K562 (cell line): ENCODE measurements at regions of chr12 and their contacts with region 1.

Region 1: DNA sequence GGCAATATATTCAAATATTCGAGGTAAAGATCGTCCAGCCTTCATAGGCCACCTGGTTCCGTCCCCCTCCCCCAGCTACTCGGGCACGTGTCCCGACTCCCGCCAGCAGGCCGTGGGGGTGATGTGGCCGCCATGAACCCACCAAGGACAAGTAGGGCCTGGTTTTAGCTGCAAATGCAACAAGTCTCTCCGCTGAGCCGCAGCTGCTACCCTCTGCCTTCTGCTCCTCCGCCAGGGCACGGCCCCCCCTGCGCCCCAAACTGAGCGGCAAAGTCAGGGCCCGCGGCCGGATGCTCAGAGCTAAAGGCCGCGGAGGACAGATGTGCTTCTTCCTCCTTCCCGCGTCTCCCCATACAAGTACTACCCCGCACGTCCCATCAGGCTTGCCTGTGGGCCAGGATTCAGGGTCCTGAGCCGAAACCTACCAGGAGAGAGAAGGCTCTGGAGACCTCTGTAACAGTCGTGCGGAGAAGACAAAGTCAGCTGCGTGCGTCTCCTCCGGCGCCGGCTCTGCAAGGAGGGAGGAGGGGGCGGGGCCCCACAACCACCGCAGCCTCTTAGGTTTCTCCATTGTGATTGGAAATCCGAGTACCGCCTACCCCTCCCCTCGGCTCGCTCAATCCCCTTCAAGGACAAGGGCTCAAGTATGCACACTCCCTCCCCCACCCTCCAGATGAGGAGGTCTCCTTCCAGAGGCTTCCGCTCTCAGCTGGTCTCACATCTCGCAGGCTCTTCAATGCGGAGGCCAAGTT is at the start of gene LDHB:
- DNase-seq: peak; percentile 82 to 96 (median 86)
- ATAC-seq: peak; percentile 96
- H3K4me3 ChIP-seq: peak within 1 kb of the TSS; percentile 89
- H3K27ac ChIP-seq: peak within 1 kb of the TSS; percentile 95
- H3K4me1 ChIP-seq: peaks cover 8% of the 10 kb centered on the region in 2 experiments; a peak in 3 of 5 replicates
- H3K27me3 ChIP-seq: no peaks in the 10 kb centered on the region
- CTCF ChIP-seq: no peak
- EP300 ChIP-seq: peak; percentile 38; the same call in 1 of the 2 replicates
- POLR2A ChIP-seq: peak; percentile 94
- RAD21 ChIP-seq: no peak
- polyA plus RNA-seq, gene LDHB: 2,666 to 2,680 TPM

Region 2: GRCh38 chr12:21379218-21379617 is 278.3 kb before region 1 on chr12:
- CTCF ChIA-PET with region 1: no interaction called
- POLR2A ChIA-PET with region 1: no interaction called
- in situ Hi-C with region 1: no loop called
- intact Hi-C with region 1: no loop called
- DNase-seq: no peak
- ATAC-seq: no peak
- H3K4me3 ChIP-seq: no peak overlapping the region
- H3K27ac ChIP-seq: no peak overlapping the region
- H3K4me1 ChIP-seq: no peaks in the 10 kb centered on the region; a peak in 1 of 5 replicates
- H3K27me3 ChIP-seq: no peaks in the 10 kb centered on the region
- CTCF ChIP-seq: no peak
- EP300 ChIP-seq: no peak
- POLR2A ChIP-seq: no peak
- RAD21 ChIP-seq: no peak

Region 3: DNA sequence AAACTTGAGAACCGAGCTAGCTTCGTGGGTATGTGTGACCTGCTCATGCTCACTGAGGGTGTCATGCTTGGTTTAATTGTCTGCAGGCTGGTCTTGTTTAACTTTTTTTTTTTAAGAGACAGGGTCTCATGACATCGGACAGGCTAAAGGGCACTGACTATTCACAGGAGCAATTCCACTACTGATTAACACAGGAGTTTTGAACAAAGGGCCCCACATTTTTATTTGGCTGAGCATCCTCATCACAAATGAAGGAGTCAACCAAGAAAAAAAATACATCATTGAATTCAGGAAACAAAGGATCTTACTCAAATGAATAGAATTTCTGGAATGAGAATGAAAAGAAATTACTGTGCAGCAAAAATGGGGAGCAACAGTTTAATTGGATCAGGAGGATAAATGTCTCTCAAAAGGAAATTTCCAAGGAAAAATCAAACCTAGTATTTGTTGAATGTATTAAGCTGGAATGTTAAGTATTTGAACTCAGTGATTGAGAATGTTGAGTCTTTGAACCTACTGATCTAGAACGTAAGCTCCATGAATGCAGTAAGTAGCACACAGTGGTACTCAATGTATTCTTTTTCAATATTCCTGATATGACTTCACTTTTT is 240.9 kb before region 1 on chr12:
- CTCF ChIA-PET with region 1: no interaction called
- POLR2A ChIA-PET with region 1: no interaction called
- in situ Hi-C with region 1: no loop called
- intact Hi-C with region 1: no loop called
- DNase-seq: no peak
- ATAC-seq: no peak
- H3K4me3 ChIP-seq: no peak overlapping the region
- H3K27ac ChIP-seq: no peak overlapping the region
- H3K4me1 ChIP-seq: peaks cover 3 to 8% of the 10 kb centered on the region in 2 experiments; a peak in 3 of 5 replicates
- H3K27me3 ChIP-seq: no peaks in the 10 kb centered on the region
- CTCF ChIP-seq: no peak
- EP300 ChIP-seq: no peak
- POLR2A ChIP-seq: no peak
- RAD21 ChIP-seq: no peak

Region 4: DNA sequence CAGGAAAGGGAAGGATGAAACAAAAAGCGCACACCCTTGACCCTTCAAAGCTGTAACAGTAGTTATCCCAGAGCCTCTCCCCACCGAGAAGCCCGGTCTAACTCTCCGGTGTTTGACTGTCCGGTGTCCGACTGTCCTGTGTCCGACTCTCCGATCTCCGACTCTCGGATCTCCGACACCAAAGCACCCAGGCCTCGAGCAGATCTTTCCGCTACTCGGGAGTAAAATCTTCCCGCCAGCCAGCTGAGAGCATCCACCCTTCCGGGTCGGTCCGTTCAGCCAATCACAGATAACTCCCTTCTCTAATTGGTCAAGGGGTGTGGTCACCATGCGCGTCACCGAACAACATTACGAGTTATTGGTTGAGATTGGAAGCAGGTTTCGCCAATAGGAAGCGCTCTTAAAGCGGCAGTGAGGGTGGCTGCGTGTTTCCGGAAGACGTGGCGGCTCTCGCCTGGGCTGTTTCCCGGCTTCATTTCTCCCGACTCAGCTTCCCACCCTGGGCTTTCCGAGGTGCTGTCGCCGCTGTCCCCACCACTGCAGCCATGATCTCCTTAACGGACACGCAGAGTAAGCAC is 156.0 kb before region 1 on chr12 and contains the starts of genes GOLT1B and RECQL:
- CTCF ChIA-PET with region 1: no interaction called
- POLR2A ChIA-PET with region 1: no interaction called
- in situ Hi-C with region 1: no loop called
- intact Hi-C with region 1: loop called (anchors 10 kb)
- DNase-seq: peak; percentile 89 to 95 (median 92)
- ATAC-seq: peak; percentile 95
- H3K4me3 ChIP-seq: peak within 1 kb of the TSS; percentile 100
- H3K27ac ChIP-seq: peak within 1 kb of the TSS; percentile 92
- H3K4me1 ChIP-seq: peaks cover 0 to 13% of the 10 kb centered on the region in 2 experiments; a peak in 2 of 5 replicates
- H3K27me3 ChIP-seq: no peaks in the 10 kb centered on the region
- CTCF ChIP-seq: no peak
- EP300 ChIP-seq: no peak
- POLR2A ChIP-seq: peak; percentile 79
- RAD21 ChIP-seq: no peak
- polyA plus RNA-seq, gene GOLT1B: 46.5 to 66.1 TPM
- polyA plus RNA-seq, gene RECQL: 28.5 to 33.7 TPM

Region 5: DNA sequence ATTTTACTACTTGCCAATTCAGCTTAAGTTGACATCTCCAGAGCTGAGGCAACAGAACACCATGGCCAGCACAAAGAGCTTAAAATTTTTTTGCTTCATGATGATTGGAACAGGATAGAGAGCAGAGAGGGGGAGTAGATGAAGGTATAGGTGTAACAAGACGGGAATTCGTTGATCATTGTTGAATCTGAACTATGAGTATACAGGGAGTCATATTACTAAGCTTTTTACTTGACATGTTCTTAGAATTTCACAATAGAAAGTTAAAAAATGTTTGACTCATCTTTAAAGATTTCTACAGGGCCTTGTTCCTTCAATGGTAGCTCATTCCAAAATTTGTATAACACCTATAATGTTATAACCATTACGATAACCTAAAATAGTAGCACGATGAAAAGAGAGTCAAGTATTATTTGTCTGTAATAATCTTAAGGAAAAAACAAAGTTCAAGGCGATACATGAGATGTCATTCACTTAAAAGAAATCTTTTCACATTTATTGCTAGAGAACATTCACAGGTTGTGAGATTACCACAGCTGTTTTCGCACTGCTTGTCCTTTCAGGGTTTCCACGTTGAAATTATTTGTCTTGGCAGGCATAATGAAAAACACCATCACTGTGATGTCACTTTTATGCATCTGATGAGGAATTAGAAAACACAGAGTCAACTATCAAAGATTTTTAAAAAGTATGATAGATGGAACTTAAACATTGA is 97.5 kb before region 1 on chr12:
- CTCF ChIA-PET with region 1: no interaction called
- POLR2A ChIA-PET with region 1: no interaction called
- in situ Hi-C with region 1: no loop called
- intact Hi-C with region 1: no loop called
- DNase-seq: no peak
- ATAC-seq: no peak
- H3K4me3 ChIP-seq: no peak overlapping the region
- H3K27ac ChIP-seq: no peak overlapping the region
- H3K4me1 ChIP-seq: no peaks in the 10 kb centered on the region
- H3K27me3 ChIP-seq: no peaks in the 10 kb centered on the region
- CTCF ChIP-seq: no peak
- EP300 ChIP-seq: no peak
- POLR2A ChIP-seq: no peak
- RAD21 ChIP-seq: no peak

Region 6: DNA sequence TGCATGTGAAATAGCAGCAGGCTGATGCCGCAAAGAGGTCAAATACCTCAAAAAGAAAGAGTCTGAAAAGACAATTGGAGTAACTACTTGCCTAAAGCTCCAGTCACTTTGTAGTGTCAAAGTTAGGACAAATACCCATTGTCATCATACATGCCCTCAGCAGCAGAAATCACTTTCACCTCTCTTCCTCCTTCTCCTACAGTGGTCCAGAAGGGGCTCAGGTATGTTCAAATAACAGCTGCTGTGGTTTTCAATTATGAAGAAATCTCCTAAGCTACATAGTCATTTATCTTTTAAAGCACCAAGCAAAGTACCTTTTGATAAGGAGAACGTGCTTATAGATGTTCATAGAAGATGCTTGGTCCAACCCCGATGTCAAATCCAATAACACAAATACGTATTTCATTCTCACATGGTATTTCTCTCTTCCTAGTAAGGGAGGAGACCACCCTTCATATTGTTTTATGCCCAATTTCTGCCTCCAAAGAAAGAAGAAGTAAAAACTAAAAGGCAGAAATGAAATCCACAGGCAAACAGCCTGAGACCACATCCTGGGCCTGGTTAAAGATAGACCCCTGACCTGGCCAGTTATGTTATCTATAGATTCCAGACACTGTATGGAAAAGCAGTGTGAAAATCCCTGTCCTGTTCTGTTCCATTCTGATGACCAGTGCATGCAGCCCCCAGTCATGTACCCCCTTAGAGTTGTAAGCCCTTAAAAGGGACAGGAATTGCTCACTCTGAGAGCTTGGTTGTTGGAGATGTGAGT is 76.6 kb before region 1 on chr12:
- CTCF ChIA-PET with region 1: no interaction called
- POLR2A ChIA-PET with region 1: no interaction called
- in situ Hi-C with region 1: no loop called
- intact Hi-C with region 1: no loop called
- DNase-seq: no peak
- ATAC-seq: no peak
- H3K4me3 ChIP-seq: no peak overlapping the region
- H3K27ac ChIP-seq: no peak overlapping the region
- H3K4me1 ChIP-seq: no peaks in the 10 kb centered on the region
- H3K27me3 ChIP-seq: no peaks in the 10 kb centered on the region
- CTCF ChIP-seq: no peak
- EP300 ChIP-seq: no peak
- POLR2A ChIP-seq: no peak
- RAD21 ChIP-seq: no peak

Region 7: GRCh38 chr12:21647179-21647578 is 10.3 kb before region 1 on chr12:
- CTCF ChIA-PET with region 1: no interaction called
- POLR2A ChIA-PET with region 1: interaction called, 12 read pairs
- in situ Hi-C with region 1: no loop called
- intact Hi-C with region 1: no loop called
- DNase-seq: no peak
- ATAC-seq: no peak
- H3K4me3 ChIP-seq: no peak overlapping the region
- H3K27ac ChIP-seq: no peak overlapping the region
- H3K4me1 ChIP-seq: peaks cover 0 to 2% of the 10 kb centered on the region in 2 experiments; a peak in 1 of 5 replicates
- H3K27me3 ChIP-seq: no peaks in the 10 kb centered on the region
- CTCF ChIP-seq: no peak
- EP300 ChIP-seq: no peak
- POLR2A ChIP-seq: peak; percentile 57
- RAD21 ChIP-seq: no peak